H1 (cell line): ENCODE measurements at regions of chr11 and their contacts with region 1.

Region 1: GRCh38 chr11:64659417-64660144 is 63.4 kb downstream of the NRXN2 start:
- DNase-seq: no peak
- H3K4me3 ChIP-seq: no peak overlapping the region
- H3K27ac ChIP-seq: no peak overlapping the region
- H3K4me1 ChIP-seq: peaks cover 0 to 10% (median 0%) of the 10 kb centered on the region in 4 experiments; a peak in 2 of 7 replicates
- H3K27me3 ChIP-seq: no peaks in the 10 kb centered on the region; a peak in 1 of 7 replicates
- CTCF ChIP-seq: no peak
- EP300 ChIP-seq: no peak
- POLR2A ChIP-seq: no peak
- RAD21 ChIP-seq: no peak

Region 2: DNA sequence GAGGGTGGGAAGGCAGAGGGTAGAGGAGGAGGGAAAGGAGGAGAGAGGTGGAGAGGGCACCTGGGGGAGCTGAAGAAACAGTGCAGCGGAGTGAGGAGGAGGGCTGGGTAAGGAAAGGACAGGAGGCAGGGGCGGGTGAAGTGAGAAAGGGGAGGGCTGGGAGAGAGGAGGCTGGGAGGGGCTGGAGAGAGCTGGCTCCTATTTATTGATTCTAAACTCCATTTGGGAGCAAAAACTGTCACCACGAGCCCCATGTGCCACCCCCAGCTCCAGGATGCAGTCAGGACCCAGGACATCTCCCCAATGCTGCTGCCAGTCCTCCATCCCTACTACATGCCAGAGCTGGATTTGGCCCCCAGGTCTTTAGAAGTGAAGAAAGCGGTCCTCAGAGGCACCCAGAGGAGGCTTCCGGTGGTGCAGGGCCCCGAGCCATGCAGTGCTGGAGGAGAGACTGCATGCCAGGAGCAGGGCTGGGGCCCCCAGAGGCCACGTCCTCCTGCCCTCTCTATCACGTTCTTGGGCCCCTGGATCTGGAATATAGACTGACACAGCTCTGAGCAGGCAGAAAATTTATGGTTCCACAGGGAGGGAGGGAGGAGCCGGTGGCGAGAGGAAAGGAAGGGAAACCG is 14.8 kb before region 1 on chr11:
- CTCF ChIA-PET with region 1: interaction called, 68 read pairs
- POLR2A ChIA-PET with region 1: no interaction called
- DNase-seq: peak in 1 of 2 experiments; percentile 67
- H3K4me3 ChIP-seq: peak overlapping the region; percentile 29 to 73 (median 40); a peak in 6 of 8 replicates
- H3K27ac ChIP-seq: no peak overlapping the region
- H3K4me1 ChIP-seq: peaks cover 4 to 23% (median 11%) of the 10 kb centered on the region in 4 experiments
- H3K27me3 ChIP-seq: peaks cover 34 to 55% (median 52%) of the 10 kb centered on the region in 4 experiments
- CTCF ChIP-seq: peak in 2 of 3 experiments; percentile 37 to 43; a peak in 3 of 4 replicates
- EP300 ChIP-seq: no peak
- POLR2A ChIP-seq: no peak
- RAD21 ChIP-seq: peak; percentile 55 to 63

Region 3: DNA sequence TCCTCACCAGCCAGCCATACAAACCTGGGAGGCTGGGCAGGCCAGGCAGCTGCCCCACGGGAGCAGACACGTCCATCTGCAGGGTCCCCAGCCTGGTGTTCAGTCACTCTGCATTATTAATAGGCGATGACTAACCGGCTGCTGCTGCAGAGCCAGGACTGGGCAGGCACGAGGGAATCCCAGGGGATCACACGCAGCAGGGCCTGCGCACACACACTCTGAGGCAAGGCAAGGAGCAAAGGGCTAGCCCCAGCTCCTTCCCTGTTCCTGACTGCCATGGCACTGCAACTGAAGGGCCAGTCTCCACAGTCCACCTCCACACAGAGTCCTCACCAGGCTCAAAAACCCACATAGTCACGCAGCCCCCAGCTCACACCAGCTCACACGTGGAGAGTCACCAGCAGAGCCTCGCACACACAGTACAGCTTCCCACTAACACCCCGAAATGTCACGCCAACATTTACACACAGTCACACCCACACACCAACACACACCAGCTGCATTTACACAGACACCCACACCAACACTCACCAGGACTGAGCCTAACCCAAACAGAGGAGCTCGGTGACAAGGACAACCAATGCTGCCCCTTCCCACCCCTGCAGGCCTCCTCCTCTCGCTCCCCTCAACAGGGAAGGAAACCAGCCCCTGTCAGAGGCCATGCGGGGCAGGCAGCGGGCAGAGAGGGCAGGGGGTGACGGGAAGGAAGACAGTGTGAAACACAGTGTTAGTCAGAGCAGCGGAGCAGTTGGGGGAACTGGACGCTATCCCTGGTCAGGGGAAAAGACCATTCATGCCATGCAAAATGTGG is 16.1 kb after region 1 on chr11:
- CTCF ChIA-PET with region 1: interaction called, 10 read pairs
- POLR2A ChIA-PET with region 1: no interaction called
- DNase-seq: no peak
- H3K4me3 ChIP-seq: no peak overlapping the region
- H3K27ac ChIP-seq: no peak overlapping the region
- H3K4me1 ChIP-seq: no peaks in the 10 kb centered on the region; a peak in 1 of 7 replicates
- H3K27me3 ChIP-seq: peaks cover 0 to 3% (median 0%) of the 10 kb centered on the region in 4 experiments; a peak in 3 of 7 replicates
- CTCF ChIP-seq: no peak
- EP300 ChIP-seq: no peak
- POLR2A ChIP-seq: no peak
- RAD21 ChIP-seq: no peak

Region 4: GRCh38 chr11:64703048-64703447 is 43.5 kb after region 1 on chr11:
- CTCF ChIA-PET with region 1: interaction called, 37 read pairs
- POLR2A ChIA-PET with region 1: no interaction called
- DNase-seq: no peak
- H3K4me3 ChIP-seq: no peak overlapping the region
- H3K27ac ChIP-seq: no peak overlapping the region
- H3K4me1 ChIP-seq: peaks cover 0 to 3% (median 2%) of the 10 kb centered on the region in 4 experiments; a peak in 3 of 7 replicates
- H3K27me3 ChIP-seq: 0 out of 7 replicates have a peak, but pooled peaks cover 0 to 2% (median 0%) of the 10 kb centered on the region in 4 experiments
- CTCF ChIP-seq: no peak
- EP300 ChIP-seq: no peak
- POLR2A ChIP-seq: no peak
- RAD21 ChIP-seq: no peak